CD14-positive monocyte (primary cell): ENCODE measurements at regions of chr18 and their contacts with region 1.

Region 1: DNA sequence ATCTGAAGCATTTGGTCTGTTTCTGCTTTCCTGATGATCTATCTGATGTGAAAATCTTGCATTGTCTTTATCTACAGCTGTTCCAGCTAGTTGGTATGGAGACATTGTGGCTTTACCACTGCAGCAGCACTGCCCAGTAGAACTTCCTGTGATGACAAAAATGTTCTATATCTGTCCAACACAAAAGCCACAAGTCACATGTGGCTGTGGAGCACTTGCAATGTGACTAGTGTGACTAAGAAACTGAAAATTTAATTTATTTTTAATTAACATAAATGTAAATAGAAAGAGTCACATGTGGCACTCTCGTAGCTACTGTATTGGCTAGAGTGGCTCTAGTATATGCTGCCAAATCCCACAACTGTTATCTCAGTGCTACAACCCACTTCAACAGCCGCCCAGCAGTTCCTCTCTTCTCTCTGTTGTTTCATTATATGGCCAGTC is 425.7 kb downstream of the SETBP1 start:
- DNase-seq: peak; percentile 65 to 81 (median 80)
- H3K4me3 ChIP-seq: peak overlapping the region in 2 of 3 experiments; percentile 13 to 48
- H3K4me3 Mint-ChIP-seq: peak overlapping the region in 1 of 2 donors; percentile 36
- H3K27ac ChIP-seq: peak overlapping the region; percentile 7 to 77
- H3K27ac Mint-ChIP-seq: peak overlapping the region in 6 of 7 donors; percentile 35 to 79 (median 61)
- H3K4me1 ChIP-seq: peaks cover 59 to 60% of the 10 kb centered on the region in 2 donors
- H3K4me1 Mint-ChIP-seq: peaks cover 47% of the 10 kb centered on the region
- H3K27me3 ChIP-seq: no peaks in the 10 kb centered on the region
- H3K27me3 Mint-ChIP-seq: no peaks in the 10 kb centered on the region
- CTCF ChIP-seq: no peak

Region 2: DNA sequence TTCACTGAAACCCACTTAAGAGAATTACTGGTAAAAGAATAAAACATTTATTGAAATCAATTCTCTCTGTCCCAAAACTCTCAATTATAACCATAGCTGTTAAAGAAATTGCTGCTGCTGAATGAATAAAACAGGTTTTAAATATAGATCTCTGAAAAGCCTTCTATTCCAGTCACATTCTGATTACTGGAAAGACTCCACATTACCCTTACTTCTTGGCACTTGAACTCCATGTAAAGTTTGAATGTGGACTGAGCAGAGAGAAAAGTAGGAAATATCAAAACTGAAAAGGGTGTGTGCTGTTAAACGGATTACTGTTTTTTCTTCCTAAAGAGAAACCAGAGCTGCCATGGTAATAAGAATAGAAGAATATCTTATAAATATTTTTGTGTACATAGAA is 1080.9 kb before region 1 on chr18:
- intact Hi-C with region 1: no loop called
- DNase-seq: no peak
- H3K4me3 ChIP-seq: no peak overlapping the region
- H3K4me3 Mint-ChIP-seq: no peak overlapping the region
- H3K27ac ChIP-seq: no peak overlapping the region
- H3K27ac Mint-ChIP-seq: no peak overlapping the region
- H3K4me1 ChIP-seq: no peaks in the 10 kb centered on the region
- H3K4me1 Mint-ChIP-seq: no peaks in the 10 kb centered on the region
- H3K27me3 ChIP-seq: no peaks in the 10 kb centered on the region
- H3K27me3 Mint-ChIP-seq: no peaks in the 10 kb centered on the region
- CTCF ChIP-seq: no peak

Region 3: DNA sequence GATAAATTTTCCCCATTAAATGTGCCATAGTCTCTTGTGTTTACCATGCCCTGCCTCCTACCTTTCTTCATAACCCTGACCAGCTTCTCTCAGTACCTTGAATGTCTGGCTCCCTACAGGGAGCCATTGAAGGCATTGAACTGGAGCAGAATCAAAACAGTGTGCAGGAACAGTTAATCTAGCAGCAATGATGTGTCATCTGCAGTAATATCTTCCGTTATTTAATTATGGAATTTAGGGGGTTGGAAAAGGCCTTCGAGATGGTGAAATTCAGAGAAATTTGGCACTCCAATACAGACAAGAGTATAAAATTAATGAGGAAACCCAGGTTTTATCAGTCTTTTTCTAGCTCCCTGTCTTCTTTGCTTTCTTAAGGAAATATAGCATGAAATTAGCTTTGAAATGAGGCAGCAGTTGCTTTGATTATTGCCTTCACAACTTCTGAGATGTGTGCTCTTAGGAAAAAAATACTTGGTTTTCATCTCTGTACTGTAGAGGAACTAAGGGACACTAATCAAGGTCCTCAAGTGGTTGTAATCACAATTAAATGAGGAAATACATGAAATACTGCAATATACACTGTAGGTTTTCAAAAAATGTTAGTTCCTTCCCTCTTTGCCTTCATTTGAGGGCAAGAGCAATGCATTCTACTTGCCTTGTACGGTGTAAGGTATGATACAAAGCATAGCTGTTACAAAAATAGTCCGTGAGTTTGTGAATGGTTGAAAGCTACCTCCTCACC is 56.6 kb before region 1 on chr18:
- intact Hi-C with region 1: loop called in 1 of 2 experiments (anchors 10 kb)
- DNase-seq: peak in 1 of 3 donors; percentile 17
- H3K4me3 ChIP-seq: no peak overlapping the region
- H3K4me3 Mint-ChIP-seq: no peak overlapping the region
- H3K27ac ChIP-seq: no peak overlapping the region
- H3K27ac Mint-ChIP-seq: no peak overlapping the region
- H3K4me1 ChIP-seq: peaks cover 12% of the 10 kb centered on the region in 2 donors
- H3K4me1 Mint-ChIP-seq: peaks cover 13% of the 10 kb centered on the region
- H3K27me3 ChIP-seq: no peaks in the 10 kb centered on the region
- H3K27me3 Mint-ChIP-seq: peaks cover 0 to 3% (median 2%) of the 10 kb centered on the region in 3 donors
- CTCF ChIP-seq: no peak

Region 4: GRCh38 chr18:45066886-45067285 is 39.5 kb before region 1 on chr18:
- intact Hi-C with region 1: loop called in 1 of 2 experiments (anchors 5 kb)
- DNase-seq: peak; percentile 84 to 89 (median 88)
- H3K4me3 ChIP-seq: peak overlapping the region in 1 of 3 experiments; percentile 57
- H3K4me3 Mint-ChIP-seq: peak overlapping the region in 1 of 2 donors; percentile 37
- H3K27ac ChIP-seq: peak overlapping the region; percentile 56 to 63
- H3K27ac Mint-ChIP-seq: peak overlapping the region; percentile 74 to 92 (median 91)
- H3K4me1 ChIP-seq: peaks cover 48 to 54% of the 10 kb centered on the region in 2 donors
- H3K4me1 Mint-ChIP-seq: peaks cover 41% of the 10 kb centered on the region
- H3K27me3 ChIP-seq: no peaks in the 10 kb centered on the region
- H3K27me3 Mint-ChIP-seq: no peaks in the 10 kb centered on the region
- CTCF ChIP-seq: no peak

Region 5: GRCh38 chr18:45169610-45170009 is 63.3 kb after region 1 on chr18:
- intact Hi-C with region 1: loop called (anchors 10 kb)
- DNase-seq: peak; percentile 54 to 81 (median 80)
- H3K4me3 ChIP-seq: no peak overlapping the region
- H3K4me3 Mint-ChIP-seq: no peak overlapping the region
- H3K27ac ChIP-seq: peak overlapping the region in 1 of 2 donors; percentile 37
- H3K27ac Mint-ChIP-seq: peak overlapping the region in 6 of 7 donors; percentile 22 to 67 (median 42)
- H3K4me1 ChIP-seq: peaks cover 31 to 36% of the 10 kb centered on the region in 2 donors
- H3K4me1 Mint-ChIP-seq: peaks cover 41% of the 10 kb centered on the region
- H3K27me3 ChIP-seq: no peaks in the 10 kb centered on the region
- H3K27me3 Mint-ChIP-seq: no peaks in the 10 kb centered on the region
- CTCF ChIP-seq: no peak